Activated CD4-positive, alpha-beta memory T cell treated with anti-CD3 and anti-CD28 coated beads, Interleukin-2, amount 10 ng/mL, durations not matched to agents 7 days and 5 days (primary cell): ENCODE measurements at regions of chr2 and their contacts with region 1.

Region 1: GRCh38 chr2:7044261-7045250 is 127.3 kb downstream of the RNF144A start:
- DNase-seq: peak; percentile 62
- H3K4me3 Mint-ChIP-seq: no peak overlapping the region
- H3K27ac Mint-ChIP-seq: no peak overlapping the region
- H3K4me1 Mint-ChIP-seq: peaks cover 3% of the 10 kb centered on the region
- H3K27me3 Mint-ChIP-seq: no peaks in the 10 kb centered on the region

Region 2: DNA sequence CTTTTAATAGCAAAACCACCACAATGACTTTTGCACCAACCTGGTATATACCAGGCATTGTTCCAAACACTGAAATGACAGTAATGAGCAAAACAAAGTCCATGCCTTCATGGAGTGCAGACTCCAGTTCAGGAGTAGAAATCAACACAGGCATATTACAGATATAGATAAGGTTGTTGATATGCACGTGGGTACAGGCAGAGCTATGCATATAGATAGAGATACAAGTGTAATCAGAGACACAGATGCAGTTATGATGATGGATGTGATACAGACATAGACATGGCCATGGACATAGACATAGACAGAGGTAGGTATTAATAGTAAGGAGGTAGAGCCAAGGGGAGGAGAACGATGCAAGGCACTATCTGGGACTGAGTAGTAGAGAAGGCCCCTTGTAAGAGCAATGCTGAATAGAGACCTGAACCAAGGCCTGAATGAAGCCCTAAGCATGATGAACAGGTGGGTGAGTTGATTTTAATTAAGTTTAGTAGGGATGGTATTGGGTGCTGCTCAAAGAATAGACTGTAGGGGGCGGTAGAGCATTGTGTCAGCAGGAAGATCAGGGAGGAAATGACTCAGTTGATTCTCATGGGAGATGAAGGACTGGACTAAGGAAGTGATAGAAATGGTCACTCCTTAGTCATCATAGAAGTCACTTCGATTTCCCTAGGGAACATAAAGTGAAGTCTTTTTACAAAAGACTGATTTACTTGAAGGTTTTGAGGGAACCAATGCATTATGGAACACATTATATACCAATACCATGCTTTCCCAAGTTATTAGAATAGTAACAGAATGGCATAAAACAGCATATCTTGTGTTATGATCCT is 218.3 kb before region 1 on chr2:
- CTCF ChIA-PET with region 1: interaction called, 13 read pairs
- POLR2A ChIA-PET with region 1: interaction called, 3 read pairs
- DNase-seq: peak; percentile 67
- H3K4me3 Mint-ChIP-seq: no peak overlapping the region
- H3K27ac Mint-ChIP-seq: no peak overlapping the region
- H3K4me1 Mint-ChIP-seq: peaks cover 13% of the 10 kb centered on the region
- H3K27me3 Mint-ChIP-seq: peaks cover 8% of the 10 kb centered on the region

Region 3: DNA sequence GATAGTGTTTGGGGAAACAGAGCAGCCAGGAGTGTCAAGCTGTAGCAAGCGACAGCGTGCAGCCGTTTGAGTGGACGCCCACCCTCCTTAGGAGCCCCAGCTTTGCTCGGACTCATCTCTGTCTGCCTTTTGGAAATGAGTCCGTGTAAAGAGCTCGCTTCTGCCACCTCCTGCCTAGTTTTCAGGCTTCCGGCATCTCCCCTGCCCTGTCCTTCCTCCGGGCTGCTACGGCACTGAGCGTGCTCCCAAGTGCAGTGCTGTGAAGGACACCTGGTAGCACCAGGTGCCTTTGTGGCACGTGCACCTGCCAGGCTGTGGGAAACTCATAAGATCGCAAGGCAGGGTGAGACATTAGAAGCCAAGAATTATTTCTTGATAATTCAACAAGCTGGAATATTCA is 10.2 kb before region 1 on chr2:
- CTCF ChIA-PET with region 1: interaction called, 13 read pairs
- POLR2A ChIA-PET with region 1: no interaction called
- DNase-seq: no peak
- H3K4me3 Mint-ChIP-seq: no peak overlapping the region
- H3K27ac Mint-ChIP-seq: no peak overlapping the region
- H3K4me1 Mint-ChIP-seq: peaks cover 9% of the 10 kb centered on the region
- H3K27me3 Mint-ChIP-seq: no peaks in the 10 kb centered on the region

Region 4: GRCh38 chr2:7057865-7058400 is 13.4 kb after region 1 on chr2:
- CTCF ChIA-PET with region 1: interaction called, 28 read pairs
- POLR2A ChIA-PET with region 1: interaction called, 3 read pairs
- DNase-seq: no peak
- H3K4me3 Mint-ChIP-seq: peak overlapping the region; percentile 5
- H3K27ac Mint-ChIP-seq: peak overlapping the region; percentile 29
- H3K4me1 Mint-ChIP-seq: peaks cover 27% of the 10 kb centered on the region
- H3K27me3 Mint-ChIP-seq: no peaks in the 10 kb centered on the region